Mammary epithelial cell (primary cell): ENCODE measurements at regions of chr2 and their contacts with region 1.

Region 1: DNA sequence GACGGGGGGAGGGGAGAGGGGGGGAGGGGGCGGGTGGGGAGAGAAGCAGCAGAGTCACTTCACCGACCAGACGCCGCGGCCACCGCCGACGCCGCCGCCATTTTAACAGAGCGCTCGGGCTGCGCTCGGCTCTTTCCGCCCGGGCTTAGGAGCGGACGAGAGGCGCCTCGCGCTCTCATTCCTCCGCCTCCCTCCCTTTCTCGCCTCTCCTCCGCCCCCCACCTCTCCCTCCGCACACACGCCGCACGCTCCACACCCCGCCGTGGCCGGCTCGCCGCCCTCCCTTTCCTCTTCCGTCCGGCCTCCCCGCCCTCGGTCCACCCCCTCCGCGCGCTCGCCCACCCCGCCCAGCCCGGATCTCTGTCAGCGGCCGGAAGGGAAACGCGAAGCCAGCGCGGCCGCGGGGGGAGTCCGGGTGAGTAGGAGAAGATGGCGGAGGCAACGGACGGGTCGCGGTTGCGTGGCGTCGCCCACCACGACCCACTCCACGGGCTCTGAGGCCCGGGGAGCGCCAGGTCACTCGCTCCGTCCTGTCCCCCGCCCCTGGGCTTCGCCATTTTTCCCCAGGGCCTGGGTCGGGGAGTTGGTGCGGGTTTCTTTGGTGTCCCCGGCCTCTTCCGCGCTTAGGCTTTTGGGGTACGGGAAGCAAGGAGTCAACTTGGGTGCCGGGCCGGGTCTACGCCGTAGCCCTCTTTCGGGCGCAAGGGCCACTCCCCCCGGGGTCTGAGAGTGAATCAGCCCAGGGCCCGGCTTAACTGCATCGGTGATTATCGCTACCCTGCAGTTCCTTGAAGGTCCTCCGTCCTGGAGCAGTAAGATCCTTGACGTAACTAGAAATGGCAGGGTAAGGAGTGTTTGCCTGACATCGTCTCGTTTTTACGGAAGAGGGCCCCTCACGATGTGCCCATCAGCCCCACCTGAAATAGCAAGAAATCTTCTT is at the start of gene USP34:
- DNase-seq: peak; percentile 96
- H3K4me3 ChIP-seq: peak within 1 kb of the TSS; percentile 94 to 100 (median 99)
- H3K27ac ChIP-seq: peak within 1 kb of the TSS; percentile 90
- H3K4me1 ChIP-seq: peaks cover 10% of the 10 kb centered on the region
- H3K27me3 ChIP-seq: no peaks in the 10 kb centered on the region
- CTCF ChIP-seq: no peak
- total RNA-seq, gene USP34: 84.5 to 108 TPM

Region 2: DNA sequence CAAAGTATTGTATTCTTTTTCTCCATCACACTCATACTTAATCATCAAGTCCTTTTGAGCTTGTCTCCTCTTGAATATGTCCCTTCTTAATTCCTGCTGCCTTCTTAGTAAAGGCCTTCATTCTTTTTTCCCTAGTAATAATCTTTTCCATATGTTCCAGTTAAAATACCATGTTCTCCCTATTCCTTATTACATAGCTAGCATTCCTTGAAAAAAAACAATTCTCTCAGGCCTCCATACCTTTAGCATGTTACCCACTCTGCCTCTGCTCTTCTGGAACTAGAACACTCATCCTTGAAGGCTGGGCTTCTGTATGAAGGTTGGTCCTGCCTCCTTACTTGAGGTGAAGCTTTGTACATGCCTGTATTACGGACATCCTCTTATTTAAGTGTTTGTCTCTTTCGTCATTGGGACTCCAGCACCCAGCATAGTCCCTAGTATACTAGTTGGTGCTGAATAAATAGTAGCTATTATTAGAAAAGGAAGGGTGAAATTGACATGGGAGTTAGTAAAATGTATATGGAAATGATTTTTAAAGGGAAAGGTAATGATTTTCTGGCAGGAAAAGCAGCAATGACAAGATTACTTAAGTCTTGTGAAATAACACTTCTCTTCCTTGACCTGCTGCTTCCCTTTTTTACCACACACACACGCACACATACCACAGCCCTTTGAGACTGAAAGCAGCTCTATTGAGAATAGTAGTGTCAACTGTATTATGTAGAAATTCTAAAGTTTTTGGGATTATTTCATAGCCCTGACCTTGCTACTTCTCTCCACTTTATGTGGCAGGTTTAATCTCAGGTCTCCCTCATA is 544.3 kb before region 1 on chr2:
- CTCF ChIA-PET with region 1: no interaction called
- dilution Hi-C with region 1: no loop called
- in situ Hi-C with region 1: no loop called
- intact Hi-C with region 1: no loop called
- DNase-seq: no peak
- H3K4me3 ChIP-seq: no peak overlapping the region
- H3K27ac ChIP-seq: no peak overlapping the region
- H3K4me1 ChIP-seq: no peaks in the 10 kb centered on the region
- H3K27me3 ChIP-seq: no peaks in the 10 kb centered on the region
- CTCF ChIP-seq: no peak

Region 3: GRCh38 chr2:61380056-61380881 is 91.0 kb before region 1 on chr2:
- CTCF ChIA-PET with region 1: no interaction called
- dilution Hi-C with region 1: no loop called
- in situ Hi-C with region 1: no loop called
- intact Hi-C with region 1: no loop called
- DNase-seq: no peak
- H3K4me3 ChIP-seq: no peak overlapping the region
- H3K27ac ChIP-seq: no peak overlapping the region
- H3K4me1 ChIP-seq: no peaks in the 10 kb centered on the region
- H3K27me3 ChIP-seq: no peaks in the 10 kb centered on the region
- CTCF ChIP-seq: no peak

Region 4: GRCh38 chr2:61411109-61411508 is 60.1 kb before region 1 on chr2:
- CTCF ChIA-PET with region 1: no interaction called
- dilution Hi-C with region 1: no loop called
- in situ Hi-C with region 1: no loop called
- intact Hi-C with region 1: no loop called
- DNase-seq: no peak
- H3K4me3 ChIP-seq: no peak overlapping the region
- H3K27ac ChIP-seq: no peak overlapping the region
- H3K4me1 ChIP-seq: no peaks in the 10 kb centered on the region
- H3K27me3 ChIP-seq: no peaks in the 10 kb centered on the region
- CTCF ChIP-seq: no peak

Region 5: GRCh38 chr2:61426267-61426897 is 44.9 kb before region 1 on chr2:
- CTCF ChIA-PET with region 1: no interaction called
- dilution Hi-C with region 1: no loop called
- in situ Hi-C with region 1: no loop called
- intact Hi-C with region 1: loop called (anchors 5 kb)
- DNase-seq: peak; percentile 11
- H3K4me3 ChIP-seq: no peak overlapping the region
- H3K27ac ChIP-seq: no peak overlapping the region
- H3K4me1 ChIP-seq: peaks cover 16% of the 10 kb centered on the region
- H3K27me3 ChIP-seq: no peaks in the 10 kb centered on the region
- CTCF ChIP-seq: peak; percentile 46

Region 6: DNA sequence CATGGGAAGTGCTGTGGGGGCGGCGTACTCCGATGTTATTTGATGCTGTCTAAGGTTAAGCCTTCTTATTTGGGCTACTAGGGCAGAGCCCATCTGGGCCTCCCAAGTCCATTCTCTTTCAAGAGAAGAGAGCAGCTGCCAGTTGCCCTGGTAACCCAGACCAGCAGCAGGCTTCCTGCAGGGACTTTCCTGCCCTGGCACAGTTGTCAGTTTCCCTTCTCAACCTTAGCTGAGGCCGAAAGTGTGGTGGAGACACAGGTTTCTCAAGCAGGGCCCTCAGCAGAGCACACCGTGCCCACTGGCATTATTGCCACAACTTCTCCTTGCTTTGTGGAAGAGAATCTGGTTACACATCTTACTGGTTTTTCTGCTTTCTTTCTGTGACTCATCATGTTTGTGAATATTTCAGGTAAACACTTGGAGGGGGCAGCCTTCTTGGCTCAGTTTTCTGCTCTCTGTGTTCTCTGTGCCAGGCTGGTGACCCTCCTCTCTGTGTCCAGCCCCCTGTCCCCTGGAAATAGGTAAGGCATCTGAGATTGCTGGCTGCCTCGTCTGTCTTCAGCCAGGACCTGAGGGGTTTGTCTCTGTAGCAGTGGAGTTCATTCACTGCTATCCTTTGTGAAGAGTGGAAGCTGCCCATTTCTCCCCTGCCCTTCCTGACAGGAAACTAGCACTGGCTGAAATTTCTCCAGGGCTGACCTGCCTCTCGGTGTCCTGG is 835.7 kb after region 1 on chr2:
- CTCF ChIA-PET with region 1: no interaction called
- dilution Hi-C with region 1: no loop called
- in situ Hi-C with region 1: no loop called
- intact Hi-C with region 1: no loop called
- DNase-seq: peak; percentile 90
- H3K4me3 ChIP-seq: no peak overlapping the region
- H3K27ac ChIP-seq: no peak overlapping the region
- H3K4me1 ChIP-seq: peaks cover 15% of the 10 kb centered on the region
- H3K27me3 ChIP-seq: no peaks in the 10 kb centered on the region
- CTCF ChIP-seq: no peak